AG04450 (cell line): ENCODE measurements at regions of chr16 and their contacts with region 1.

Region 1: DNA sequence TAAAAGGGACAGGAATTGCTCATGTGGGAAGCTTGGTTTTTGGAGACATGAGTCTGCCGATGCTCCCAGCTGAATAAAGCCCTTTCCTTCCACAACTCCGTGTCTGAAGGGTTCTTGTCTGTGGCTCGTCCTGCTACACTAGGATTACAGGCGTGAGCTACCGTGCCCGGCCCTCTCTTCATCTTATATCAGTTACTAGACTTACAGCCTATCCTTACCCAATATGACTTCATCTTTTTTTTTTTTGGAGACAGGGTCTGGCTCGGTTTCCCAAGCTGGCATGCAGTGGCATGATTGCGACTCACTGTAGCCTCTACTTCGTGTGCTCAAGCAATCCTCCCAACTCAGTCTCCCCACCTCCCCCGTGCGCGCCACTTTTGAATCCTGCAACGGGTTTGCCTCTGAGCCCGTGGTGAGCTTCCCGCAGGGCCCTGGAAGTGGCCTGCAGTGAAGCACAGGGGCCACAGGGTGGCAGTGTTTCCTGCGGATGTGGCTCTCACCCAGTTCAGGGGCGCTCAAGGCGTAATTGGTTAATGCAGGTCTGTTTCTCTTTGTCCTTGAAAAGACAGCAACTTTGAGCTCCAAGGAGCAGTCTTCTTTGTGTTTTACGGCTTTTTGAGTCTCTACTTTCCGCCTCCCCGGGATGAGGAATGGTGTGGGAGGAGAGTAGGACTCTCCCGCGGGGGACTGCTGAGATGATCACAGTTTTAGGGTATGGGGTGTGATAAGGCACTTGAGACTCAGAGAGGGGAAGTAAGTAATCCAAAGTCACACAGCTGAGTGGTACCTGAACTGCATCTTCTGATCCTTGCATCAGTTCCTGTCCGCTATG is 22.7 kb upstream of the GPRC5B start:
- DNase-seq: peak; percentile 37
- H3K4me3 ChIP-seq: peak overlapping the region; percentile 22; the same call in 1 of the 2 replicates
- H3K27ac ChIP-seq: no peak overlapping the region
- H3K27me3 ChIP-seq: no peaks in the 10 kb centered on the region
- CTCF ChIP-seq: peak; percentile 100

Region 2: GRCh38 chr16:19601083-19601976 is 306.0 kb before region 1 on chr16:
- CTCF ChIA-PET with region 1: interaction called, 17 read pairs
- POLR2A ChIA-PET with region 1: no interaction called
- DNase-seq: no peak
- H3K4me3 ChIP-seq: no peak overlapping the region
- H3K27ac ChIP-seq: no peak overlapping the region
- H3K27me3 ChIP-seq: no peaks in the 10 kb centered on the region
- CTCF ChIP-seq: peak; percentile 65

Region 3: DNA sequence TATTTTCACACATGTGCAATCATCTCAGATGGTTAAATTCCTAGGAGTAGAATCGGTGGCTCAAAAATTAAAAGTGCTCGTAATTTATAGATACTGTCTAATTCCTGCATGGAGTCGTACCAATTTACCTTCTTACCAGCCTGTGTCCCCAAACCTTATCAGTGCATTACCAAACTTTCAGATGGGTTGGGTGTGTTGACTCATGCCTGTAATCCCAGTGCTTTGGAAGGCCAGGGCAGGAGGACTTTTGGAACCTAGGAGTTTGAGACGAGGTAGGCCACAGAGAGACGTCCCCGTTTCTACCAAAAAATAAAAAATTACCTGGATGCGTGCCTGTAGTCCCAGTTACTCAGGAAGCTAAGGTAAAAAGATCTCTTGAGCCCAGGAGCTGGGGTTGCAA is 11.8 kb after region 1 on chr16:
- CTCF ChIA-PET with region 1: interaction called, 24 read pairs
- POLR2A ChIA-PET with region 1: no interaction called
- DNase-seq: no peak
- H3K4me3 ChIP-seq: no peak overlapping the region
- H3K27ac ChIP-seq: no peak overlapping the region
- H3K27me3 ChIP-seq: no peaks in the 10 kb centered on the region
- CTCF ChIP-seq: no peak

Region 4: DNA sequence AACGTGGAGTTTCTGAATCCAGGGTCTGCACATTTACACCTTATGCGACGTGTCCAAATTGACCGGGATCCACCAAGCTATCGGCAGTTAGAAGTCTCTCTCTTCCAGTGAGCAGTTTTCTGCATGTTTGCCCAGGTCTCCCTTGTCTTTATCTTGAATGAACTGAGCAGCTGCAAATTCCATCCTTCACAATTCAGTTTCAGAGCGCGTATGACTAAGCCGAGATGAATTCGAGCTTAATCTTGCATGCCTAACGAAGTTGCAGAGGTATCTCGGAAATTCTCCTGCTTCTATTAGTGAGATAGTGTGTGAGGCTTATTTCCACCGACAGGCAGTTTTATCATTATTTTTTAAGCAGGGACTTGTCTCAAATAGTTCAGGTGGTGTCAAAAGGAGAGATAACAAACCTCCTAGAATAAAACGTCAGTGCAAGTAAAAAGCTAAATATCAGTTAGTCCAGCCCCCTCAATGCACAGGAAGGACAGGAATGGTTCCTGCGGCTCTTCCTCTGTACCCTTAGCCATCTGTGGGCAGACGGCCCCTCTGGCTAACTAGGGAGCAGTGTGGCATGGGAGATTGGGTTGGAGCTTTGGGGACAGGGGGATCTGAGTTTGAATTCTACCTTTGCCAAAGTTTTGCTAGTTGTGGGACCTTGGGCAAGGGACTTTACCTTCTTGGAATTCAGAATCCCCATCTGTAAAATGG is 259.3 kb after region 1 on chr16:
- CTCF ChIA-PET with region 1: no interaction called
- POLR2A ChIA-PET with region 1: no interaction called
- DNase-seq: no peak
- H3K4me3 ChIP-seq: no peak overlapping the region
- H3K27ac ChIP-seq: no peak overlapping the region
- H3K27me3 ChIP-seq: no peaks in the 10 kb centered on the region
- CTCF ChIP-seq: no peak

Region 5: DNA sequence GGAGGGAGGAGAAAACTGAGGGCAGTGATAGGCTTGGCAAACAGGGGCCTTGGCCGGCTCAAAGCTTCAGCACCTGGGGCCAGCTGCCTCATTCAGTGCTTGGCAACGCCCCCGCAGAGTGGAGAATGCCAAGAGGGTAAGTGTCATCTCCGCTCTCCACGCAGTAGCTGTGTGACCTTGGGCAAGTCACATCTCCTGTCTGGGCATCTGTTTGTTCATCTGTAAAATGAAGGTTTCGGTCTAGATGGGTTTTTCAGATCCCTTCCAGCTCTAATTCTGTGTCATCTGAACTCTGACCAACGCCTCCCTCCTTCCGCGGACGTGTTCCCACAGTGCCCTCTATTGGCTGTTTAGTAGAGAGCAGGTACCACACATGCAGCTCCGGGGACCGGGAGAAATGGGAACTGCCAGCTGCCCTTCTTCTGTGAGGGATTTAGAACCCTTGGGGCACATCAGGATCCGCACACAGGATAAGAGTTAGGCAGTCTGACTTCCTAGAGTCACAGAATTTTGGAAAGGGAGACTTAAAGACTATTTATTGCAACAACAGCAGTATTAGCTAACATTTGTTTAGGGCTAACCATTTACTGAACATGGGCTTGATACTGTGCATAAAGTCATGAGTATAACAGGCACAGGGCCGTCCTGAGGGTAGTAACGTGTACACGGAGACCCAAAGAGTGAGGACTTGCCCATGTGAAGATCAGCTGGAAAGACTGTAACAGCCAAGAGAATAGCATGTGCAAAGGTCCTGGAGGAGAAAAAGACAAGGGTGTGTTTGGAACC is 393.1 kb after region 1 on chr16:
- CTCF ChIA-PET with region 1: interaction called, 133 read pairs
- POLR2A ChIA-PET with region 1: no interaction called
- DNase-seq: no peak
- H3K4me3 ChIP-seq: no peak overlapping the region
- H3K27ac ChIP-seq: no peak overlapping the region
- H3K27me3 ChIP-seq: no peaks in the 10 kb centered on the region
- CTCF ChIP-seq: peak; percentile 59

Region 6: GRCh38 chr16:20383106-20384029 is 476.0 kb after region 1 on chr16:
- CTCF ChIA-PET with region 1: interaction called, 405 read pairs
- POLR2A ChIA-PET with region 1: no interaction called
- DNase-seq: peak; percentile 30
- H3K4me3 ChIP-seq: no peak overlapping the region
- H3K27ac ChIP-seq: no peak overlapping the region
- H3K27me3 ChIP-seq: no peaks in the 10 kb centered on the region
- CTCF ChIP-seq: peak; percentile 83